ENCODE measurements at regions of chr11 and their contacts with region 1.

Region 1: GRCh38 chr11:124758317-124759203 is 3.5 kb downstream of the ESAM start:
- DNase-seq: peak; percentile 78
- ATAC-seq: peak; percentile 70
- H3K4me3 Mint-ChIP-seq: peak overlapping the region; percentile 58
- H3K27ac Mint-ChIP-seq: no peak overlapping the region
- H3K4me1 Mint-ChIP-seq: peaks cover 39% of the 10 kb centered on the region
- H3K27me3 Mint-ChIP-seq: peaks cover 46% of the 10 kb centered on the region

Region 2: DNA sequence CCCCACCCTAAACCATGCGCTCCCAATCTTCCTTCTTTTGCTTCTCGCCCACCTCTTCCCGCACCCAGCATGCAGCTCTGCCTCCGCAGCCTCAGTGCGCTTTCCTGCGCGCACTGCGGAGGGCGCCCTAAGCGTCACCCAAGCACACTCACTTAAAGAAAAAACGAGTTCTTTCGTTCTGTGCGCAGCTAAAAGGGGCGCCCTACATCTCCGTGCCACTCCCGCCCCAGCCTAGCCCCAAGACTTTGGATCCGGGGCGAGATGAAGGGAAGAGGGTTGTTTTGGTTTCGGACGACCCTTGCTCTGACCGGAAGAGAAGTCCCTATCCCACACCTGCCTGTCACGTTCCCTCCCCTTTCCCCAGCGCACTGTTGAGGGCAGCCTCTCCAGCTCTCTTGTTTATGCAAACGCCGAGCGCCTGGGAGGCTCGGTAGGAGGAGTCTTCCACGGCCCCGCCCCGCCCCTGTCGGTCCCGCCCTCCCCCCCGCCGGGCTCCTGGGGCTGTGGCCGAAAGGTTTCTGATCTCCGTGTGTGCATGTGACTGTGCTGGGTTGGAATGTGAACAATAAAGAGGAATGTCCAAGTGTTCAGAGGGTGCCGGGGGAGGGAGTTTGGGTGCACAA is 11.8 kb before region 1 on chr11:
- CTCF ChIA-PET with region 1: interaction called, 89 read pairs
- POLR2A ChIA-PET with region 1: interaction called, 7 read pairs
- DNase-seq: peak; percentile 81
- ATAC-seq: peak; percentile 92
- H3K4me3 Mint-ChIP-seq: peak overlapping the region; percentile 88
- H3K27ac Mint-ChIP-seq: peak overlapping the region; percentile 84
- H3K4me1 Mint-ChIP-seq: peaks cover 25% of the 10 kb centered on the region
- H3K27me3 Mint-ChIP-seq: peaks cover 22% of the 10 kb centered on the region

Region 3: GRCh38 chr11:124778281-124778680 is 19.7 kb after region 1 on chr11:
- CTCF ChIA-PET with region 1: interaction called, 25 read pairs
- POLR2A ChIA-PET with region 1: no interaction called
- DNase-seq: no peak
- ATAC-seq: no peak
- H3K4me3 Mint-ChIP-seq: no peak overlapping the region
- H3K27ac Mint-ChIP-seq: no peak overlapping the region
- H3K4me1 Mint-ChIP-seq: peaks cover 23% of the 10 kb centered on the region
- H3K27me3 Mint-ChIP-seq: no peaks in the 10 kb centered on the region

Region 4: DNA sequence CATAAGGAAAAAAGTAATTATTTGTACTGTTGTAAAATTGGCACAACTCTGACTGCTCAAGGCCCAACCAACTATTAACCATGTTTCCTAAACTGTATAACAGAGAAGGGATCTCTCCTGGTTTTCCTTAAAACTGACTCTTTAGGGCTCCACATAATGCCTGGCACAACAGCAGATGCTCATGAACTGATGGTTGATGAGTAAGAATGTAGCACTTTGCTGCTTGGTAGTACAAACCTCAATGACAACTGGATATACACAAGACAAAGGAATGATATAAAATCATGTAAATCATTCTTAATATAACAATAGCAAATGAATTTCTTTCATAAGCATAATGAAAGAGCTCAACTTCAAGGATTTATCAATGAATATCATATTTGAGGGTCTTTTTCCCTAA is 30.0 kb after region 1 on chr11:
- CTCF ChIA-PET with region 1: interaction called, 20 read pairs
- POLR2A ChIA-PET with region 1: no interaction called
- DNase-seq: no peak
- ATAC-seq: no peak
- H3K4me3 Mint-ChIP-seq: no peak overlapping the region
- H3K27ac Mint-ChIP-seq: no peak overlapping the region
- H3K4me1 Mint-ChIP-seq: peaks cover 25% of the 10 kb centered on the region
- H3K27me3 Mint-ChIP-seq: no peaks in the 10 kb centered on the region

Region 5: DNA sequence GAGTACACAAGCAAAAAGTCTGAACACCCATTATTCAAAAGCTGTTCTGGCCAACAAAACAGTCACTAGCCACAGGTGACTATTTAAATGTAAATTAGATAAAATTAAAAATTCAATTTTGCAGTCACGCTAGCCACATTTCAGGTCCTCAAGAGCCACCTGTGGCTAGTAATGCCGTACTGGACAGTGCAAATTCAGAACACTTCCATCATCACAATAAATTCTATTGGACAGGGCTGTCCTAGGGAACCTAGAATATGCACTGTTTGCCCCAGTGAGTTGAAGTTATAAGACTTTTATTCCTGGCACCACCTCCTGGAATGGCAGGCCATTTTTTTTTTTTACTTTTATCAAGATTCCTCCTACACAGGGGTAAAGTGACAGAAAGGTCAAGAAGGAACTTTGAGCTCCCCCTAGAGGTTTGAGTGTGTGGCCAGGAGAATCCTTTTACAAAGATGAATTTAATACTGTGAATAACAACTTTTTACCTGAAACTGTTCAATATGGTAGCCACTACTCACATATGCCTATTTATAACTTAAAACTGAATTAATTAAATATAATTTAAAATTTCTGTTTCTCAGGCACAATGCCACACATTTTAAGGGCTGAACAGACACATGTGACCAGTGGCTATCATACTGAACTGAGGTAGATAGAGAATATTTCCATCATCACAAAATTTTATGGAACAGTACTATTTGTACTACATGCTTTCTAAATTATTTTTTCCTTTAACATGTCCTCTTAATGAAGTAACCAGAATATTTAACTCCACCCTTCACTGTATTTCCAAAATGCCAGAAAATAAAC is 35.1 kb after region 1 on chr11:
- CTCF ChIA-PET with region 1: interaction called, 28 read pairs
- POLR2A ChIA-PET with region 1: no interaction called
- DNase-seq: peak; percentile 44
- ATAC-seq: peak; percentile 64
- H3K4me3 Mint-ChIP-seq: no peak overlapping the region
- H3K27ac Mint-ChIP-seq: no peak overlapping the region
- H3K4me1 Mint-ChIP-seq: peaks cover 34% of the 10 kb centered on the region
- H3K27me3 Mint-ChIP-seq: no peaks in the 10 kb centered on the region

Region 6: DNA sequence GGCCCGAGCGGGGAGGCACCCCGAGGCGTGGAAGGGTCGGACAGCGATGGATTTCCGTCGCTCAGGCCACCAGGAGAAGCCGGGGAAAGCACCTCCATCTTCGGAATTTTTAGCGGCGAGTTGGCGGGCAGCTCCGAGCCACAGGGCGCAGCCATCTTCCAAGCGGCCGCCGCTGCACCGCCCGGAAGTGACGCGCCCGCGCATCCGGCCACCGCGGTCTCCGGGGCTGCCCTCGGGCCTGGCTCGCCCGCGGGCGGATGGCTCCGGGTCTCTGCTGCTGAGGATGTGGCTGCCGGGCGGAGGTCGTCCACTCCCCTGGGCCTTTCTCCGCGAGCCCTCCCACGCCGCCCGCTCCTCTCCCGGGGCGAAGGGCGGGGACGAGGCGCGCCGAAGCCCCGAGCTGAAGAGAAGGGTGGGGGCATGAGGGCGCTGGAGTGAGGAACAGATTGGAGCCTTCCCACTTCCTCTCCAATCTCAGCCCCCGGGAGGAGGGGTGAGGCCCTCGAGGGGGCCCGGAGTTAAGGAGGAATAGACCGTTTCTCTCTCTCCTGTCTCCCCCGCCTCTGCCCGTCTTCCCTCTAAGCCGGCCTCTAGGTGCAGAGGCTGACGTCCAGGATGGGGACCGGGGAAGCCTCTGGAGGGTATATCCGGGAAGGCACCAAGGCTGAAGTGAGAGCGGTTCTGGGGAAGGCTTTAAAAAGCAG is 41.8 kb after region 1 on chr11 and contains the start of gene MSANTD2:
- CTCF ChIA-PET with region 1: interaction called, 28 read pairs
- POLR2A ChIA-PET with region 1: no interaction called
- DNase-seq: peak; percentile 83
- ATAC-seq: peak; percentile 90
- H3K4me3 Mint-ChIP-seq: peak within 1 kb of the TSS; percentile 85
- H3K27ac Mint-ChIP-seq: peak within 1 kb of the TSS; percentile 93
- H3K4me1 Mint-ChIP-seq: peaks cover 26% of the 10 kb centered on the region
- H3K27me3 Mint-ChIP-seq: peaks cover 12% of the 10 kb centered on the region
- total RNA-seq, gene MSANTD2: 9.1 to 10.2 TPM

Region 7: DNA sequence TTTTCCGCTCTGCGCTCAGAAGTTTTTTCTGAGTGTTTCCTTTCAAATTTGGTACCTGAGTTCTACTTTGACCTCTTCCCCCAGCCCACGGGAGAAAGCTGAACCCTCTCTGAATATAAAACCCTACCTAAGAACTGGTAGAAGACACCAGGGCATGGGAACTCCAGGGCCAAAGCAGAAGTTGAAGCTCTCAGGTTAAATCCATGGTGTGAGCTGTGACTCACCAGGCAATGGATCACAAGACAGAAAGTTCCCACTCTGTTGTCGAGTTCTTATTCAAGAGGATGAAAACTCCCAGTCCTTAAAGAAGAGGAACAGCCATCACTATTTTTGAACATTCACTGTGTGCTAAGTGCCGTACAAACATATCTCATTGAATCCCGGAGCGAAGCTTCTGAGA is 343.9 kb after region 1 on chr11:
- CTCF ChIA-PET with region 1: no interaction called
- POLR2A ChIA-PET with region 1: no interaction called
- DNase-seq: no peak
- ATAC-seq: no peak
- H3K4me3 Mint-ChIP-seq: no peak overlapping the region
- H3K27ac Mint-ChIP-seq: no peak overlapping the region
- H3K4me1 Mint-ChIP-seq: no peaks in the 10 kb centered on the region
- H3K27me3 Mint-ChIP-seq: no peaks in the 10 kb centered on the region